Activated CD4-positive, alpha-beta memory T cell treated with anti-CD3 and anti-CD28 coated beads for 36 hours (primary cell): ENCODE measurements at regions of chr2 and their contacts with region 1.

Region 1: DNA sequence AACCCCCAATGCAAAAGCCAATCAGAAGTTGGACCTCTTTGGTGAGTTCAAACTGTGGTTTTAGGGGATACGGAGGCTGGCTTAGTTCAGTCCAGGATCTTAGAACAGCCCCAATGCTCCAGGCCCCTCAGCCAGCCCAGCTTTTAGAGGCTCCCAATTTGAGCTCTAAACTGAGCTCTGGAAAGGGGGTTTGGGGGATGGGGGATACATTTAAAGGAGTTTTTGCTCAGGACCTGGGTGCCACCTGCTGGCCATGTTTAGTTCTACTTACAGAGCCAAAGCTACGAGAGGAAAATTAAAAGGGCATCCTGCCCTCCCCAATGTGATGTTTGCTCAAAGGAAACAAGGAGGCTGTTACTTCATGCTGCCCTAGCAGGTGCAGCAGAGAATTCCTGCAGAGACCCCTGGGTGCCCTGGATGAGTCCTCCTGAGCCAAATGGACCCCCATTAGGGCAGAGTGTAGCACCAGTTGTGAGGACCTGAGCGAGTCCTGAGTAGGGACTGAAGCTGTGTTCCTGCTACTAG is 15.9 kb upstream of the TMEM214 start:
- DNase-seq: peak; percentile 54
- H3K4me3 Mint-ChIP-seq: no peak overlapping the region
- H3K27ac Mint-ChIP-seq: no peak overlapping the region
- H3K4me1 Mint-ChIP-seq: no peaks in the 10 kb centered on the region
- H3K27me3 Mint-ChIP-seq: no peaks in the 10 kb centered on the region

Region 2: GRCh38 chr2:26942543-26943295 is 74.1 kb before region 1 on chr2:
- CTCF ChIA-PET with region 1: interaction called, 14 read pairs
- POLR2A ChIA-PET with region 1: no interaction called
- intact Hi-C with region 1: no loop called
- DNase-seq: peak; percentile 78
- H3K4me3 Mint-ChIP-seq: no peak overlapping the region
- H3K27ac Mint-ChIP-seq: no peak overlapping the region
- H3K4me1 Mint-ChIP-seq: peaks cover 2% of the 10 kb centered on the region
- H3K27me3 Mint-ChIP-seq: peaks cover 17% of the 10 kb centered on the region

Region 3: DNA sequence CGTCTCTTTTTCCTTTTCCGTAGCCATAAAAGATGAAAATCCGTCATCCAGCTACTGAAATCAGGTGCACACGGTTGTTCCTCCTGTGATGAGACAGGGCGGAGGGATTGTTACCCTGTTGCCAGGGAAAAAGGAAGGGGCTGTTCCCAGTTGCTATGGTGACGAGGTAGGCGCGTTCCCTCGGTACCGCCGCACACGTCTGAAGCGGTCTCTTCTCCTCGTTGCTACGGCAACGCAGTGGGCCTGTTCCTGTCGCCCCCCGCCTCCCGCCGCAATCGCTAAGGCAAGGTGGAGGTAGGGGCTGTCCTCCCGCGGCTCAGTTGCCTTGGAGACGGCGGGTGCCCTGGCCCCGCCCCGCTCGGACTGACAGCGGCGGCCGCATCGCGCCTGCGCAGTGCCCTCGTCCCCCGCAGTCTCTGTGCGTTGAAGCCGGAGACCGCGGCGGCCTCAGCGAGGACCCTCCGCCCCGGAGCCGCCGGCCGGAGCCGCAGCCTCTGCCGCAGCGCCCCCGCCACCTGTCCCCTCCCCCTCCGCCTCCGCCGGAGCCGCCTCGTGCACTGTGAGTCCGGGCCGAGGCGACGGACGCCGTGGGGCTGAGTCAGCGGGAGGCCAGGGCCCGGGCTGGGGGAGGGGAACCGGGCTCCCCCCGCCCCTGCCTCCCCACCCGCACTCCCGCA is 46.5 kb before region 1 on chr2 and contains the start of gene MAPRE3:
- CTCF ChIA-PET with region 1: interaction called, 16 read pairs
- POLR2A ChIA-PET with region 1: no interaction called
- intact Hi-C with region 1: no loop called
- DNase-seq: peak; percentile 85
- H3K4me3 Mint-ChIP-seq: peak within 1 kb of the TSS; percentile 73
- H3K27ac Mint-ChIP-seq: no peak within 1 kb of the TSS
- H3K4me1 Mint-ChIP-seq: peaks cover 15% of the 10 kb centered on the region
- H3K27me3 Mint-ChIP-seq: peaks cover 17% of the 10 kb centered on the region
- total RNA-seq, gene MAPRE3: 4.4 TPM